ENCODE measurements at regions of chr13 and their contacts with region 1.

Region 1: GRCh38 chr13:45242070-45242469 is 41.2 kb upstream of the KCTD4 start:
- DNase-seq: no peak
- H3K4me3 ChIP-seq: no peak overlapping the region
- H3K27ac ChIP-seq: peak overlapping the region in 3 of 4 donors; percentile 64 to 74 (median 71)
- H3K4me1 ChIP-seq: peaks cover 0 to 27% (median 23%) of the 10 kb centered on the region in 4 donors
- H3K27me3 ChIP-seq: no peaks in the 10 kb centered on the region
- CTCF ChIP-seq: no peak
- EP300 ChIP-seq: no peak
- POLR2A ChIP-seq: no peak

Region 2: GRCh38 chr13:44837250-44837649 is 404.8 kb before region 1 on chr13:
- intact Hi-C with region 1: no loop called
- DNase-seq: no peak
- H3K4me3 ChIP-seq: no peak overlapping the region
- H3K27ac ChIP-seq: no peak overlapping the region
- H3K4me1 ChIP-seq: no peaks in the 10 kb centered on the region
- H3K27me3 ChIP-seq: no peaks in the 10 kb centered on the region
- CTCF ChIP-seq: no peak
- EP300 ChIP-seq: no peak
- POLR2A ChIP-seq: no peak

Region 3: DNA sequence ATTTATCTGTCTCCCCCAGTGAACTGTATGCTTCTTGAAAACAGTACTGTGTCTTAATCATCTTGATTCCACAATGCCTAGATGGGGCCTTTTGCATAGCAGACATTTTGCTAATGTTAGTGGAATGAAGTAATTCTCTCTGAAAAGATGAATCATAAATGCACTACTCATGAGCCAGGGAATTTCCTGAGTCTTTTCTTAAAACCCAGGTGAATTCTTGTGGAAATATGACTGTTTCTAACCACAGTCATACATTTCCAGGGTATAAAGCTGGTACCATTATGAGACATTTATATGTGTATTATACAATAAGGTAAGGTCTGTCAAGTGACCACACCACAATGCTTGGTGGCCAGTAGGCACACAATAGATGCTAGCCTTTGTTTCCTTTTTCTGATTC is 35.7 kb before region 1 on chr13:
- intact Hi-C with region 1: loop called (anchors 5 kb)
- DNase-seq: no peak
- H3K4me3 ChIP-seq: peak overlapping the region in 1 of 4 donors; percentile 24
- H3K27ac ChIP-seq: peak overlapping the region; percentile 66 to 86 (median 79)
- H3K4me1 ChIP-seq: peaks cover 0 to 48% (median 34%) of the 10 kb centered on the region in 4 donors
- H3K27me3 ChIP-seq: no peaks in the 10 kb centered on the region
- CTCF ChIP-seq: no peak
- EP300 ChIP-seq: no peak
- POLR2A ChIP-seq: no peak

Region 4: DNA sequence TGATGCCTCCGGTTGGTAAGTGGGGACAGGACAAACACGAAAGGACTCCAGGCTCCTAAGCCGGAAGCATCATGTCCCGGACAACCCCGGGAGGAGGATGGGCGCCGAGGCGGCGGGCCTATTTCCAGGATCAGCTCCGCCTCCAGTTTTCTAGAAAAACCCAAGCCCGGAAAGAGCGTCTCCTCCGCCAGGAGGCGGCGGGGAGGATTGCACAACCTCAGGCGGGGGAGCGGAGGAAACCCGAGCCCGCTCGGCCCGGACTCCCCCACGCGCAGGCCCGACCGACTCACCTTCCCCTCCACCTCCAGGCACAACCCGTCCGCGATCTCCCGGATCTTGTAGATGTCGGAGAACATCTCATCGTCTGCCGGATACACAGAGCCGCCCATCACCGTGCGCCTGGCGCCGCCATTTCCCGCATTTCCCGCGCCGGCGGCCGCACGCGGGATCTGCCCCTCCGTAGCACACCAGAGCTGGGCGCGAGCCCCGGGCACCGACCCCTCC is 98.4 kb after region 1 on chr13:
- intact Hi-C with region 1: no loop called
- DNase-seq: peak; percentile 97
- H3K4me3 ChIP-seq: peak overlapping the region; percentile 74 to 100 (median 98)
- H3K27ac ChIP-seq: peak overlapping the region; percentile 99 to 100 (median 100)
- H3K4me1 ChIP-seq: peaks cover 2 to 63% (median 52%) of the 10 kb centered on the region in 4 donors
- H3K27me3 ChIP-seq: no peaks in the 10 kb centered on the region
- CTCF ChIP-seq: peak in 3 of 4 experiments; percentile 55 to 72 (median 66)
- EP300 ChIP-seq: peak in 2 of 4 donors; percentile 75 to 85
- POLR2A ChIP-seq: peak in 1 of 2 donors; percentile 42